PC-3 (cell line): ENCODE measurements at regions of chr2 and their contacts with region 1.

Region 1: GRCh38 chr2:209960676-209961630 is 41.5 kb upstream of the RPE start:
- DNase-seq: peak; percentile 68
- ATAC-seq: peak; percentile 77
- H3K4me3 ChIP-seq: no peak overlapping the region
- H3K27ac ChIP-seq: no peak overlapping the region
- H3K4me1 ChIP-seq: no peaks in the 10 kb centered on the region
- H3K27me3 ChIP-seq: peaks cover 46% of the 10 kb centered on the region
- CTCF ChIP-seq: peak; percentile 87

Region 2: DNA sequence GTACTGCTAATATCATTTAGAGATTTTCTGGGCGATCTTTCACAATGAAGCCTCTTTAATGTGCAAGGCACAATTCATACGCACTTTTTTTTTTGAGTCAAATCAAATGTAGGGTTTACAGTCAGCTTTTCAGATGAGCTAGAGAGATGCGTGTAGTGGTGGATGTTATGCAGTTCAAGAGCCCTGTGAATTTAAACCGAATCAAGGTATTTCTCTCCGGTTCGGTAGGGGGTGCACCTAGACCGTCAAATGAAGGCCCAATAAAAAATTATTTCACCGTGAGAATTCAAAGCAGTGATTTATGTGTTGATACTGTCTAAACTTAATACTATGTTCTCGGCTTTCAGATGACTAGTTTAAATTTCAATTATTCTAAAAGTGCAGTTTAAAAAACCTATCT is 1553.3 kb before region 1 on chr2:
- CTCF ChIA-PET with region 1: no interaction called
- POLR2A ChIA-PET with region 1: no interaction called
- intact Hi-C with region 1: loop called (anchors 10 kb)
- DNase-seq: peak; percentile 55
- ATAC-seq: peak; percentile 78
- H3K4me3 ChIP-seq: no peak overlapping the region
- H3K27ac ChIP-seq: no peak overlapping the region
- H3K4me1 ChIP-seq: no peaks in the 10 kb centered on the region
- H3K27me3 ChIP-seq: peaks cover 88% of the 10 kb centered on the region
- CTCF ChIP-seq: peak; percentile 70